ENCODE measurements at regions of chr15 and their contacts with region 1.

Region 1: DNA sequence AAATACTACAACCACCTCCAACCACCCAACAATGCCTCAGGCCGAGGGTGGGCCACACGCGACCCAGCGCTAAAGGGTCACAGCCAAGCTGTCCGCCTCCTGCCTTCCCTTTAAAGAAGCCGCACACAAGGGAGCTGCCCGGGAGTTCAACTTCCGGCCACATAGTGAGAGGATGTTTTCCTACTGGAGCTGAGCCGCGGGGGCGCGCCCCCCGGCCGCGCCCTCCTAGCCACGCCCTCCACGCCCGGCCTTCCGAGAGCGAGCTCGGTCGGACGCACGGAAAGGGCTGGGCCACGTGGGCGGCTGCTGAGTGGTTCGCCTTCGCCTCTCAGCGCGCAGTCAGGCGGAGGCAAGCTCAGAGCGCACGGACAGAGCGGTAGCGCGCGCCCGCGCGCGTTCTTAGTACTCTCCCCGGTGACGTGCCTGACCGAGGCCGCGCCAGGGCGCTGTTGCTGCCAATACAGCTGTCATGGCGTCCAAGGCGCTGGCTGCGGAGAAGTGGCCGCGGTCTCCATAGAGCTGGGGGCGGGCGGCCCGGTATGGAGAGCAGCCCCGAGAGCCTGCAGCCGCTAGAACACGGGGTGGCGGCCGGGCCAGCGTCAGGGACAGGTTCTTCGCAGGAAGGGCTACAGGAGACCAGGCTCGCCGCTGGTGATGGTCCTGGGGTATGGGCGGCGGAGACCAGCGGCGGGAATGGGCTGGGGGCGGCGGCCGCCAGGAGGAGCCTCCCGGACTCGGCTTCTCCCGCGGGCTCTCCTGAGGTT is at the start of gene MINDY2:
- DNase-seq: peak; percentile 95
- H3K4me3 Mint-ChIP-seq: no peak within 1 kb of the TSS
- H3K27ac Mint-ChIP-seq: peak within 1 kb of the TSS; percentile 94
- H3K4me1 Mint-ChIP-seq: peaks cover 22% of the 10 kb centered on the region
- H3K27me3 Mint-ChIP-seq: no peaks in the 10 kb centered on the region
- total RNA-seq, gene MINDY2: 12.5 to 17.5 TPM

Region 2: DNA sequence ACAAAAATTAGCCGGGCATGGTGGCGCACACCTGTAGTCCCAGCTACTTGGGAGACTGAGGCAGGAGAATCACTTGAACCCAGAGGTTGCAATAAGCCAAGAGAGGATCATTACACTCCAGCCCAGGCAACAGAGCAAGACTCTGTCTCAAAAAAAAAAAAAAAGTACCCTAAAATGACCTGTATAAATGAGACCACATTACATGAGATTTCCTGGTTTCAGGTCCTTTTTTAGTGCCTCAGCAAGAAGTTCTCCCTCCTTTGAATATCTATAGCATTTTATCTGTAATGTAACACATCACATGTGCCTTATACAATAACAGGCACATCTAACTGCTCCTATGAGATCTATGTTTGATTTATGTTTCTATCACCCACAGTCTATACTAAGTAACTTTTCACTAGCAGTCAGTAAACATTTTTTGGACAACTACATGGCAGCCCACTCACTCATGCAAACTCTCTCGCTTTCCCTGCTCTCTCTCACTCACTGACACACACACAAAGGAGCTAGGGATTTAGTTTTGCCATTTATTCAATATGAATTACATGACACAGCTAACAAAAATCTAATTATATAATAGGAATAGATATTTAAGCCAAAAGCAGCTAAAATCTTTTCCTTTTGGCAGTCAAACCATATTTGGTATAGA is 55.6 kb before region 1 on chr15:
- CTCF ChIA-PET with region 1: no interaction called
- POLR2A ChIA-PET with region 1: no interaction called
- DNase-seq: no peak
- H3K4me3 Mint-ChIP-seq: no peak overlapping the region
- H3K27ac Mint-ChIP-seq: no peak overlapping the region
- H3K4me1 Mint-ChIP-seq: peaks cover 4% of the 10 kb centered on the region
- H3K27me3 Mint-ChIP-seq: no peaks in the 10 kb centered on the region

Region 3: GRCh38 chr15:58749532-58750337 is 21.3 kb before region 1 on chr15 and contains the start of gene ADAM10:
- CTCF ChIA-PET with region 1: interaction called, 7 read pairs
- POLR2A ChIA-PET with region 1: interaction called, 16 read pairs
- DNase-seq: peak; percentile 99
- H3K4me3 Mint-ChIP-seq: peak within 1 kb of the TSS; percentile 96
- H3K27ac Mint-ChIP-seq: peak within 1 kb of the TSS; percentile 94
- H3K4me1 Mint-ChIP-seq: peaks cover 35% of the 10 kb centered on the region
- H3K27me3 Mint-ChIP-seq: no peaks in the 10 kb centered on the region
- total RNA-seq, gene ADAM10: 140 to 170 TPM

Region 4: DNA sequence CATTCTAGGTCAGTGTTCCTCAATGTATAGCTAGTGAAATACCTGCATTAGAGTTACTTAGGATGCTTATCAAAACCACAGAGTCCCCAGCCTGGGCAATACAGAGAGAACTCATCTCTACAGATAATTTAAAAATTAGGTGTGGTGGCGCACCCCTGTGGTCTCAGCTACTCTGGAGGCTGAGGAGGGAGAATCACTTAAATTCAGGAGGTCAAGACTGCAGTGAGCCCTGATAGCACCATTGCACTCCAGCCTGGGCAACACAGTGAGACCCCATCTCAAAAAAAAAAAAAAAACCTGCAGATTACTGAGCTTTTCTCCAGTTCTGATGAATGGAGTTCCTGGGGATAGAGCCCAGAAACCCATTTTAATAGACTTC is 10.0 kb before region 1 on chr15:
- CTCF ChIA-PET with region 1: interaction called, 13 read pairs
- POLR2A ChIA-PET with region 1: no interaction called
- DNase-seq: peak; percentile 33
- H3K4me3 Mint-ChIP-seq: no peak overlapping the region
- H3K27ac Mint-ChIP-seq: no peak overlapping the region
- H3K4me1 Mint-ChIP-seq: no peaks in the 10 kb centered on the region
- H3K27me3 Mint-ChIP-seq: peaks cover 9% of the 10 kb centered on the region

Region 5: DNA sequence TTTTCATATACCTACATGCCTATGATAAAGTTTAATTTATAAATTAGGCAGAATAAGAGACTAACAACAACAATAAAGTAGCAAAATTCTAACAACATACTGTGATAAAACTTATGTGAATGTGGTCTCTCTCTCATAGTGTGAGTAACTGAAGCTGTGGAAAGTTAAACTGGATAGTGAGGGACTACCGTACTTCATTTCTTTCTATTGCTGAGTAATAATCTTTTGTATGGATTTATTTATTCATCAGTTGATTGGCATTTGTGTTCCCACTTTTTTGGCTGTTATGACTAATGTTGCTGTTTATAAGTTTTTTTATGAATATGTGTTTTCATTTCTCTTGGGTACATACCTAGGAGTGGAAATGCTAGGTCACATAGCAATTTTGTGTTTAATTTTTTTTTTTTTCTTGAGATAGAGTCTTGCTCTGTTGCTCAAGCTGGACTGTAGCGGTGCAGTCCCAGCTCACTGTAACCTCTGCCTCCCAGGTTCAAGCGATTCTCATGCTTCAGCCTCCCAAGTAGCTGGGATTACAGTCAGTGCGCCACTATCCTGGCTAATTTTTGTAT is 257.4 kb after region 1 on chr15:
- CTCF ChIA-PET with region 1: no interaction called
- POLR2A ChIA-PET with region 1: no interaction called
- DNase-seq: no peak
- H3K4me3 Mint-ChIP-seq: no peak overlapping the region
- H3K27ac Mint-ChIP-seq: no peak overlapping the region
- H3K4me1 Mint-ChIP-seq: peaks cover 22% of the 10 kb centered on the region
- H3K27me3 Mint-ChIP-seq: no peaks in the 10 kb centered on the region